Left ventricle myocardium inferior (tissue), 1 donor: ENCODE measurements at regions of chr6 and their contacts with region 1.

Region 1: GRCh38 chr6:134882426-134883038 is 67.4 kb downstream of the ALDH8A1 start:
- DNase-seq: peak; percentile 56
- H3K4me3 ChIP-seq: no peak overlapping the region
- H3K27ac ChIP-seq: no peak overlapping the region
- H3K4me1 ChIP-seq: no peaks in the 10 kb centered on the region
- H3K27me3 ChIP-seq: peaks cover 23% of the 10 kb centered on the region
- CTCF ChIP-seq: peak; percentile 99

Region 2: GRCh38 chr6:134152767-134153485 is 729.6 kb before region 1 on chr6:
- intact Hi-C with region 1: loop called (anchors 10 kb)
- DNase-seq: no peak
- H3K4me3 ChIP-seq: no peak overlapping the region
- H3K27ac ChIP-seq: no peak overlapping the region
- H3K4me1 ChIP-seq: peaks cover 4% of the 10 kb centered on the region
- H3K27me3 ChIP-seq: no peaks in the 10 kb centered on the region
- CTCF ChIP-seq: no peak

Region 3: GRCh38 chr6:135114355-135115145 is 232.0 kb after region 1 on chr6:
- intact Hi-C with region 1: no loop called
- DNase-seq: no peak
- H3K4me3 ChIP-seq: no peak overlapping the region
- H3K27ac ChIP-seq: no peak overlapping the region
- H3K4me1 ChIP-seq: no peaks in the 10 kb centered on the region
- H3K27me3 ChIP-seq: peaks cover 20% of the 10 kb centered on the region
- CTCF ChIP-seq: no peak